ENCODE measurements at regions of chr1 and their contacts with region 1.

Region 1: GRCh38 chr1:115138968-115139367 is 49.7 kb upstream of the TSPAN2 start:
- DNase-seq: peak; percentile 76
- H3K4me3 ChIP-seq: no peak overlapping the region
- H3K4me3 Mint-ChIP-seq: no peak overlapping the region
- H3K27ac Mint-ChIP-seq: no peak overlapping the region
- H3K4me1 ChIP-seq: peaks cover 13% of the 10 kb centered on the region
- H3K4me1 Mint-ChIP-seq: peaks cover 29% of the 10 kb centered on the region
- H3K27me3 ChIP-seq: no peaks in the 10 kb centered on the region
- H3K27me3 Mint-ChIP-seq: no peaks in the 10 kb centered on the region
- CTCF ChIP-seq: peak; percentile 66 to 73

Region 2: GRCh38 chr1:115183721-115184259 is 44.8 kb after region 1 on chr1:
- CTCF ChIA-PET with region 1: no interaction called
- POLR2A ChIA-PET with region 1: no interaction called
- intact Hi-C with region 1: loop called (anchors 1 kb)
- DNase-seq: no peak
- H3K4me3 ChIP-seq: no peak overlapping the region
- H3K4me3 Mint-ChIP-seq: no peak overlapping the region
- H3K27ac Mint-ChIP-seq: no peak overlapping the region
- H3K4me1 ChIP-seq: no peaks in the 10 kb centered on the region; the same call in 1 of the 2 replicates
- H3K4me1 Mint-ChIP-seq: peaks cover 20% of the 10 kb centered on the region
- H3K27me3 ChIP-seq: no peaks in the 10 kb centered on the region
- H3K27me3 Mint-ChIP-seq: no peaks in the 10 kb centered on the region
- CTCF ChIP-seq: no peak

Region 3: DNA sequence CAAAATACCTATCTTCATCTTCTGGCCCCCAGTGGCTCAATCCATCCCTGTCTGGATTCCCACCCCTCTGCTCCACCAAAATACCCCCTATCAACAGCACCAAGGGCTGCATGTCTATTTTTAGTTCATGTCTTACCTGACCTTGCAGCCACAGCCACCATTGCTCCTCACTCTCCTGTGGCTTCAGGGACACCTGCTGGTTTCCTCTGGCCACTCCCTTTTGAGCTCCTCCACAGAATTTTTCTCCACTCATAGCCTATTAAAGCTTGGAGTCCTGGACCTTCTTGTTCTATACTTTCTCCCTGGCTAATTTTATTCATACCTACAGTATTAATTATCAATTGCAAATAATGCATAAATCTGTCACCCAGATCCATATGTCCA is 324.4 kb after region 1 on chr1:
- CTCF ChIA-PET with region 1: interaction called, 7 read pairs
- POLR2A ChIA-PET with region 1: no interaction called
- intact Hi-C with region 1: loop called (anchors 1 kb)
- DNase-seq: peak in 1 of 2 experiments; percentile 27
- H3K4me3 ChIP-seq: no peak overlapping the region
- H3K4me3 Mint-ChIP-seq: no peak overlapping the region
- H3K27ac Mint-ChIP-seq: no peak overlapping the region
- H3K4me1 ChIP-seq: no peaks in the 10 kb centered on the region
- H3K4me1 Mint-ChIP-seq: no peaks in the 10 kb centered on the region
- H3K27me3 ChIP-seq: no peaks in the 10 kb centered on the region
- H3K27me3 Mint-ChIP-seq: no peaks in the 10 kb centered on the region
- CTCF ChIP-seq: peak in 1 of 2 experiments; percentile 45

Region 4: GRCh38 chr1:115469703-115470476 is 330.9 kb after region 1 on chr1:
- CTCF ChIA-PET with region 1: interaction called, 3 read pairs
- POLR2A ChIA-PET with region 1: no interaction called
- intact Hi-C with region 1: loop called (anchors 1 kb)
- DNase-seq: peak; percentile 50 to 66
- H3K4me3 ChIP-seq: no peak overlapping the region
- H3K4me3 Mint-ChIP-seq: no peak overlapping the region
- H3K27ac Mint-ChIP-seq: no peak overlapping the region
- H3K4me1 ChIP-seq: no peaks in the 10 kb centered on the region
- H3K4me1 Mint-ChIP-seq: no peaks in the 10 kb centered on the region
- H3K27me3 ChIP-seq: no peaks in the 10 kb centered on the region
- H3K27me3 Mint-ChIP-seq: no peaks in the 10 kb centered on the region
- CTCF ChIP-seq: peak; percentile 73 to 84